ENCODE measurements at regions of chr7 and their contacts with region 1.

Region 1: DNA sequence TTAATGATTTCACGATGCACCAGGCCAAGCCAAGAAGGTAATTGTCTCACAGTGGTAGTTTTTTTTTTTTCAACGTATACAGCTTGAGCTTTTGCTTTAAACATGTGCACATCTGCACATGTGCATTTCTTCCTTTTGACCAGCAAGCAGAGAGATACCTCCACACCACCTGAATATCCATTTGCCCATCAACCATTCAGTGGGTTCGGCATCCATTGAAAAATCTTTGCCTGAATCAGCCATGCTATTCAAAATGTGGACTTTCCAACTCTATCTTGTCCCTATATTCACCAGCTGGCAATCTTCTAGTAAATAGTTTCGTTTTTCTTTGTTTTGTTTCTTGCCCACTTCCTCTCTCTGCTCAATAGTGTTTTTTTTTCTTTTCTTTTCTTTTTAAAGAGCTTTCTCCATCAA is 7.7 kb upstream of the TRA2A start:
- DNase-seq: no peak
- ATAC-seq: peak; percentile 77
- H3K4me3 Mint-ChIP-seq: peak overlapping the region; percentile 70
- H3K27ac Mint-ChIP-seq: peak overlapping the region; percentile 94
- H3K4me1 Mint-ChIP-seq: peaks cover 17% of the 10 kb centered on the region
- H3K27me3 Mint-ChIP-seq: no peaks in the 10 kb centered on the region

Region 2: GRCh38 chr7:23490357-23491135 is 49.0 kb before region 1 on chr7:
- POLR2A ChIA-PET with region 1: interaction called, 11 read pairs
- DNase-seq: peak; percentile 63
- ATAC-seq: peak; percentile 91
- H3K4me3 Mint-ChIP-seq: peak overlapping the region; percentile 88
- H3K27ac Mint-ChIP-seq: peak overlapping the region; percentile 87
- H3K4me1 Mint-ChIP-seq: peaks cover 4% of the 10 kb centered on the region
- H3K27me3 Mint-ChIP-seq: no peaks in the 10 kb centered on the region

Region 3: DNA sequence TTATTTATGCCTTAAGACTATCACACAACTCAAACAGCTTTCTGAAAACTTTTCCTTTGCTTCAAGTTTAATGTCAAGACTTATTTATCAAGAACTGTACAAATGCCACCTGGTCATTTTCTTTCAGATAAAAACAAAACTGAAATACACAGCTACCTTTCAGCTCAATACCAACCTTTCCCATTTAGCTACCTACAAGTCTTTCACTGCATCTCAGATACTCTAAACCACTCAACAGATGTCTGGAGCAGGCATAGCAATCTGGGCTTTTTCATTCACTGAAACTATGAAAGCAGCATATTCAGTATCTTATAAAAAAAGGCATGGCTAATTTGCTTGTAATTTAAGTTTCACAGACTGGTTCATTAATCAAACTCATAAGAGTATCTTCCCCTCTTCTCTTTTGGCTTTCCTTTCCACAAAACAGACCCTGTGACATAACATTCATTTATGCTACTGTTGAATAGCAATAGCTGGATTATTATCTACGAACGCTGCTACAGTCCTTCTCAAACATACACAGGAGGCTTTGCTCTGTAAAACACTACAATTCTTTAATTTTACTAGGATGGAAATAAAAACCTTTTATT is 15.9 kb before region 1 on chr7:
- POLR2A ChIA-PET with region 1: no interaction called
- DNase-seq: no peak
- ATAC-seq: no peak
- H3K4me3 Mint-ChIP-seq: no peak overlapping the region
- H3K27ac Mint-ChIP-seq: no peak overlapping the region
- H3K4me1 Mint-ChIP-seq: peaks cover 40% of the 10 kb centered on the region
- H3K27me3 Mint-ChIP-seq: no peaks in the 10 kb centered on the region

Region 4: DNA sequence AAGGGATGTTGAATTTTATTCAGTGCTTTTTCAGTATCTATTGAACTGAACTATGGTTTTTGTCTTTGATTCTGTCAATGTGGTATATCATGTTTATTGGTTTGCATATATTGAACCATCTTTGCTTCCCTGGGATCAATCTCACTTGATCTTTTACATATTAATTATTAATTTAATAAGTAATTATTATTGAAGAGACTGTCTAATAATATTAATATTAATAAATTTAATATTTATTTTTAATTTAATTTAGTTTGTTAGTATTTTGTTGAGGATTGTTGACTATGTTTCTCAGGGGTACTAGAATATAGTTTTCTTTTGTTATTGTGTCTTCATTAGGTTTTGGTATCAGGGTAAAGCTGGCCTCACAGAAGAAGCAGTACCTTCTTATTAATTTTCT is 18.8 kb after region 1 on chr7:
- POLR2A ChIA-PET with region 1: no interaction called
- DNase-seq: no peak
- ATAC-seq: no peak
- H3K4me3 Mint-ChIP-seq: no peak overlapping the region
- H3K27ac Mint-ChIP-seq: no peak overlapping the region
- H3K4me1 Mint-ChIP-seq: no peaks in the 10 kb centered on the region
- H3K27me3 Mint-ChIP-seq: peaks cover 21% of the 10 kb centered on the region

Region 5: GRCh38 chr7:23597094-23598091 is 57.9 kb after region 1 on chr7 and contains the start of gene CCDC126:
- POLR2A ChIA-PET with region 1: interaction called, 11 read pairs
- DNase-seq: peak; percentile 87
- ATAC-seq: peak; percentile 84
- H3K4me3 Mint-ChIP-seq: peak within 1 kb of the TSS; percentile 85
- H3K27ac Mint-ChIP-seq: peak within 1 kb of the TSS; percentile 71
- H3K4me1 Mint-ChIP-seq: peaks cover 24% of the 10 kb centered on the region
- H3K27me3 Mint-ChIP-seq: peaks cover 9% of the 10 kb centered on the region
- total RNA-seq, gene CCDC126: 10.0 to 11.8 TPM

Region 6: GRCh38 chr7:23783115-23783514 is 243.6 kb after region 1 on chr7:
- POLR2A ChIA-PET with region 1: no interaction called
- DNase-seq: no peak
- ATAC-seq: no peak
- H3K4me3 Mint-ChIP-seq: no peak overlapping the region
- H3K27ac Mint-ChIP-seq: no peak overlapping the region
- H3K4me1 Mint-ChIP-seq: no peaks in the 10 kb centered on the region
- H3K27me3 Mint-ChIP-seq: no peaks in the 10 kb centered on the region